MCF 10A (cell line): ENCODE measurements at regions of chr6 and their contacts with region 1.

Region 1: GRCh38 chr6:32529697-32530429 is at the start of gene HLA-DRB5:
- DNase-seq: no peak
- H3K4me3 Mint-ChIP-seq: no peak within 1 kb of the TSS
- H3K27ac Mint-ChIP-seq: no peak within 1 kb of the TSS
- H3K4me1 Mint-ChIP-seq: no peaks in the 10 kb centered on the region
- H3K27me3 Mint-ChIP-seq: peaks cover 48% of the 10 kb centered on the region
- CTCF ChIP-seq: no peak
- total RNA-seq, gene HLA-DRB5: not detected in 2 replicates

Region 2: DNA sequence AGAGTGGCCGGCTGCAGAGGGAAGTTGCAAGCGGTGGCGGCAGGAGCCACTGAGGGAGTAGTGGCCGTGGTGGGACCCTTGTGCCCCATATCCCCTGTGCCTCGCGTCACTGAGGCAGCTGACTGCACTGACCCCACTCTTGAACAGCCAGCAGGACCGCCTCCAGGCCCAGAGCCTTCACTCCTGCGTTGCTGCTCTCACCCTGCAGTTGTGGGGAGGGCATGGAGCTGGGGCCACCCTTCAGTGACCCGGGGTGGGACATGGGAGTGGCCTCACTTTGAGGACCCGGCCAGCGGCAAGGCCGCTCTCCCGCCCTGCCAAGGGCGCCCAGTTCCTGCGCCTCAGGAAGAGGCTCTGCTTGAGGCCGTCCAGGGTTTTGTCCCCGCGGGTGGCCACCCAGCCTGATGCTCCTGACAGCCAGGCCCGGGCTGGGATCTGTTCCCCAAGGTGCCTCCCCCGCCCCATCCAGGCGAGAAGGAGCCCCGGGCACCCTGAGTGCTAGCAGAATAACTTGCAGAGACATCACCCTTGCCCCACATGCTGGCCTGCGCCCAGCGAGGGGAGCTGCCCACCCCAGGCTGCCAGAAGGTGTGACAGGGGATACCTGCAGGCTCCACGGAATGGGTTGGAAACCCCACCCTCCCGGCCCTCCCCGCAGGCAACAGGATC is 45.8 kb before region 1 on chr6:
- CTCF ChIA-PET with region 1: no interaction called
- POLR2A ChIA-PET with region 1: no interaction called
- intact Hi-C with region 1: loop called (anchors 10 kb)
- DNase-seq: no peak
- H3K4me3 Mint-ChIP-seq: no peak overlapping the region
- H3K27ac Mint-ChIP-seq: no peak overlapping the region
- H3K4me1 Mint-ChIP-seq: no peaks in the 10 kb centered on the region
- H3K27me3 Mint-ChIP-seq: peaks cover 68% of the 10 kb centered on the region
- CTCF ChIP-seq: no peak